AG04449 (cell line): ENCODE measurements at regions of chr12 and their contacts with region 1.

Region 1: GRCh38 chr12:89247541-89247942 is 104.8 kb downstream of the DUSP6 start:
- DNase-seq: no peak
- H3K4me3 ChIP-seq: no peak overlapping the region
- CTCF ChIP-seq: no peak

Region 2: DNA sequence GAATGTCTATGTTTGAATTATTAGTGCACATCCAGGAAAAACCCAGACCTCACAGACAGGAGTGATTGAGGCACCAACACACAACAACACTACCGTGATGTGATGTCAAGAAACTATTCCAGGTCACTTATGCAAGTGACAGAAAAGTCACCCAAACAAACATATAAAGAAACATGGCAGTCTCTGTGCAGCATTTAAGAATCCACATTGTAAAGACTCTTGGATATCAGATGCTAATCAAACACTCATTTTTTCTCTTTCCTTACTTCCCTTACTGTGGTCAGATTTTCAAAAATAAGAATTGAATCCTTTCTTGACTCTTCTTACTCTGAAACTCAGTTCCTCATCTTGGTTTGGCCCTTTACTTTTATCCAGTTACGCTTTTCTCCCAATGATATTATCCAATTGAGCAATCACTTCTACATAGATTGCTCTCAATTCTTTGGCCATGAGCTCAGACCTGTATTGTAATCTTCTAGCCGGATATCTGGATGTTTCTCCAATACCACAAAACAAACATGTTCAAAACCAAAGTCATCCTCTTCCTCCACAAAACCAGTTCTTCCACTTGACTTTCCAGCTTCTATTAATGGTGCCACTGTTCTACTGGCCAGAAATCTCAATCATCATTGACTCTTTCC is 10.7 kb before region 1 on chr12:
- CTCF ChIA-PET with region 1: interaction called, 11 read pairs
- POLR2A ChIA-PET with region 1: no interaction called
- DNase-seq: peak; percentile 21
- H3K4me3 ChIP-seq: no peak overlapping the region
- CTCF ChIP-seq: no peak

Region 3: GRCh38 chr12:89343127-89343526 is 95.6 kb after region 1 on chr12:
- CTCF ChIA-PET with region 1: no interaction called
- POLR2A ChIA-PET with region 1: no interaction called
- DNase-seq: no peak
- H3K4me3 ChIP-seq: no peak overlapping the region
- CTCF ChIP-seq: no peak